Natural killer cell (primary cell): ENCODE measurements at regions of chr20 and their contacts with region 1.

Region 1: GRCh38 chr20:40962730-40963504 is 65.7 kb upstream of the TOP1 start:
- DNase-seq: peak; percentile 70 to 85
- ATAC-seq: peak; percentile 85 to 97 (median 94)
- H3K4me3 ChIP-seq: no peak overlapping the region
- H3K4me3 Mint-ChIP-seq: no peak overlapping the region
- H3K27ac ChIP-seq: no peak overlapping the region
- H3K27ac Mint-ChIP-seq: no peak overlapping the region
- H3K4me1 ChIP-seq: peaks cover 21% of the 10 kb centered on the region
- H3K4me1 Mint-ChIP-seq: peaks cover 9 to 10% of the 10 kb centered on the region in 2 donors
- H3K27me3 ChIP-seq: no peaks in the 10 kb centered on the region
- H3K27me3 Mint-ChIP-seq: peaks cover 0 to 4% of the 10 kb centered on the region in 2 donors
- CTCF ChIP-seq: peak; percentile 96

Region 2: DNA sequence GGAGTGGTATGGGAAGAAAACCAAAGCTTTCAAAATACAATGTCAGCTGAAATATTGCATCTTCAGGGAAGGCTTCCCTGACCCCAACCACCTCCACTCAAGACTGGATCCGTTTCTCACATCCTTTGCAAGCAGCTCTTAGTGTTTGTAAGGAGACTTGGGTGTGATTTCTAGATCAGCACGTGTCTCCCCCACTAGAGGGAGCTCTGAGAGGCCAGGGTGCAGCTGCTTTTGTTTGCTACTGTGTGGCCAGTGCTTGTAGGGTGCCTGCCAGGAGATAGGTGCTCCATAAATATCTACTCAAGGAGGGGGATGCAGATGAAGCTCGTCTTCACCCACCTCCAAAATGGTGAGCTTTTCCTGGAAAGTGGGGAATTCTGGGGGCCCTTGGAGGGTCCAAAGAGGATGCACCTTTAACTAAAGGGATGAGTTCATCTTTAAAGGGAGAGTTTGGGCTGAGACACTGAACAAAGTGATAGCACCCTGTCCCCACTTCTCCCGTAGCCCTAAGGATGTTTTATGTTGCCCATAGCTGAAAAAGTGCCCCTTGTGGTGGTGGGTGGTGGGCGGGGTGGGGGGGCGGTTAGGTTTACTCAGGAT is 221.3 kb before region 1 on chr20:
- intact Hi-C with region 1: loop called (anchors 1 kb)
- DNase-seq: peak; percentile 28 to 66
- ATAC-seq: peak in 2 of 3 donors; percentile 52 to 65
- H3K4me3 ChIP-seq: no peak overlapping the region
- H3K4me3 Mint-ChIP-seq: no peak overlapping the region
- H3K27ac ChIP-seq: no peak overlapping the region
- H3K27ac Mint-ChIP-seq: no peak overlapping the region
- H3K4me1 ChIP-seq: peaks cover 6% of the 10 kb centered on the region
- H3K4me1 Mint-ChIP-seq: peaks cover 0 to 13% of the 10 kb centered on the region in 2 donors
- H3K27me3 ChIP-seq: no peaks in the 10 kb centered on the region
- H3K27me3 Mint-ChIP-seq: peaks cover 22 to 38% of the 10 kb centered on the region in 2 donors
- CTCF ChIP-seq: peak; percentile 75

Region 3: DNA sequence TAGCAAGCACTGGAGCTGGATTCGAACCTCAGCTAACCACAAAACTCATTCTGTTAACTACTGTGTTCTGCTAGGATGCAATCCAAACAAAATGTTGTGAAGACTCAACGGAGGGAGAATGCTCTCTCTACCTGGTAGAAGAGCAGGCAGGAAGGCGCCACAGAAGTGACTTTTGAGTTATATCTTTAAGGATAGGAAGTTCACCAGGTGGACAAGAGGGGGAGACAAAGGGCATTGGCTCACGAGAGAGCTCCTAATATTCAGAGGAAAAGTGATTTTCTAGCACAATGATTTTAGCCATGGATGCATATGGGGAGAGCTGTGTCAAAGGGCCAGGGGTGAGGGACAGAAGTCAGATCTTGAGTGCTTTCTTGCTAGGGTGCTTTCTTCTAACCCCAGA is 165.5 kb before region 1 on chr20:
- intact Hi-C with region 1: loop called (anchors 1 kb)
- DNase-seq: peak in 1 of 2 donors; percentile 39
- ATAC-seq: peak in 1 of 3 donors; percentile 61
- H3K4me3 ChIP-seq: no peak overlapping the region
- H3K4me3 Mint-ChIP-seq: no peak overlapping the region
- H3K27ac ChIP-seq: no peak overlapping the region
- H3K27ac Mint-ChIP-seq: no peak overlapping the region
- H3K4me1 ChIP-seq: no peaks in the 10 kb centered on the region
- H3K4me1 Mint-ChIP-seq: no peaks in the 10 kb centered on the region
- H3K27me3 ChIP-seq: no peaks in the 10 kb centered on the region
- H3K27me3 Mint-ChIP-seq: peaks cover 10 to 23% of the 10 kb centered on the region in 2 donors
- CTCF ChIP-seq: peak; percentile 53

Region 4: GRCh38 chr20:41038878-41039404 is 76.0 kb after region 1 on chr20:
- intact Hi-C with region 1: no loop called
- DNase-seq: no peak
- ATAC-seq: no peak
- H3K4me3 ChIP-seq: no peak overlapping the region
- H3K4me3 Mint-ChIP-seq: no peak overlapping the region
- H3K27ac ChIP-seq: no peak overlapping the region
- H3K27ac Mint-ChIP-seq: no peak overlapping the region
- H3K4me1 ChIP-seq: peaks cover 8% of the 10 kb centered on the region
- H3K4me1 Mint-ChIP-seq: peaks cover 61 to 79% of the 10 kb centered on the region in 2 donors
- H3K27me3 ChIP-seq: no peaks in the 10 kb centered on the region
- H3K27me3 Mint-ChIP-seq: no peaks in the 10 kb centered on the region
- CTCF ChIP-seq: no peak

Region 5: GRCh38 chr20:41095110-41095969 is 132.4 kb after region 1 on chr20:
- intact Hi-C with region 1: loop called (anchors 1 kb)
- DNase-seq: peak; percentile 45 to 84
- ATAC-seq: peak; percentile 76 to 84 (median 77)
- H3K4me3 ChIP-seq: no peak overlapping the region
- H3K4me3 Mint-ChIP-seq: peak overlapping the region; percentile 35
- H3K27ac ChIP-seq: no peak overlapping the region
- H3K27ac Mint-ChIP-seq: peak overlapping the region in 1 of 2 donors; percentile 34
- H3K4me1 ChIP-seq: no peaks in the 10 kb centered on the region
- H3K4me1 Mint-ChIP-seq: peaks cover 0 to 5% of the 10 kb centered on the region in 2 donors
- H3K27me3 ChIP-seq: no peaks in the 10 kb centered on the region
- H3K27me3 Mint-ChIP-seq: no peaks in the 10 kb centered on the region
- CTCF ChIP-seq: peak; percentile 96

Region 6: DNA sequence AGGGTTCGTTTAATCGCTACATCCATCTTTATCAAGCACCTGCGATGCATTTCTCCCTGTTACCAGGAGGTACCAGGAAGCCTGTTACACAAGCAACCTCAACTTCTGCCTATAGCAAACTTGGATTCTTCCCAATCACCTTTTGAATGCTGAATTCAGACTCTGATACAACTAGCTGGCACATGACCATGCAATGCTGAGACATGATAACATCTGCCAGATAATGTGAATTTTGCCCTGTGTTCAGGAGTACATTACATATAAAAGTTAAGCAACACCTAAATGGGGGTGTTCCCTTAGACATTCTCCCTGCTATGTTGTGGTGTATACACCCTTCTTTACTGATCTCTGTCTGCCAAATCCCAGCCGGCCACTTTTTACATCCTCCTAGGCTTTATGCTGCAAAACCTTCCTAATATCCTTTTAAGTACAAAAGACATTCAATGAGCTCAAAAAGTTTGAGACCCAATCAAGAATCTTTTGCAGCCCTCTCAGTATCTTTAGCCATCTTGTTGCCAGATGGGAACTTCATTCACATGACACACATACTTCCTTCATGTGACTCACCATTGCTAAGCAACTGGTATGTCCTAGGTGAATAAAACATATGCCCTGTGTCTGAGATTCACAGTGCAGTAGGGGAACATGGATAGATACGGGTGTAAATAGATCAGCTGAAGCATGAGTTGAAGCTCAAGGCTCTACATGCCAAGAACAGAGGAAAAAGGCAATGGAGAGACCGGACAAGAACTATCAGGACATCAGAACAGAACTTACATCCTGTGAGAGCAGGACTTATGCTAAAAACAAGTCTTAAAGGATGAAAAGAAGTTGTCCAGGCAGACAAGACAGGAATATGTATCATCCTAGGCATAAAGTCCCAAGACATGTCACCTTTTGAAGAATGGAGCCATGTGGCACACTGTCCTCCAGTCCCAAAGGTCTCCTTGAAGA is 270.3 kb after region 1 on chr20:
- intact Hi-C with region 1: loop called (anchors 1 kb)
- DNase-seq: no peak
- ATAC-seq: no peak
- H3K4me3 ChIP-seq: no peak overlapping the region
- H3K4me3 Mint-ChIP-seq: no peak overlapping the region
- H3K27ac ChIP-seq: no peak overlapping the region
- H3K27ac Mint-ChIP-seq: no peak overlapping the region
- H3K4me1 ChIP-seq: peaks cover 4% of the 10 kb centered on the region
- H3K4me1 Mint-ChIP-seq: peaks cover 7 to 11% of the 10 kb centered on the region in 2 donors
- H3K27me3 ChIP-seq: no peaks in the 10 kb centered on the region
- H3K27me3 Mint-ChIP-seq: no peaks in the 10 kb centered on the region
- CTCF ChIP-seq: no peak

Region 7: DNA sequence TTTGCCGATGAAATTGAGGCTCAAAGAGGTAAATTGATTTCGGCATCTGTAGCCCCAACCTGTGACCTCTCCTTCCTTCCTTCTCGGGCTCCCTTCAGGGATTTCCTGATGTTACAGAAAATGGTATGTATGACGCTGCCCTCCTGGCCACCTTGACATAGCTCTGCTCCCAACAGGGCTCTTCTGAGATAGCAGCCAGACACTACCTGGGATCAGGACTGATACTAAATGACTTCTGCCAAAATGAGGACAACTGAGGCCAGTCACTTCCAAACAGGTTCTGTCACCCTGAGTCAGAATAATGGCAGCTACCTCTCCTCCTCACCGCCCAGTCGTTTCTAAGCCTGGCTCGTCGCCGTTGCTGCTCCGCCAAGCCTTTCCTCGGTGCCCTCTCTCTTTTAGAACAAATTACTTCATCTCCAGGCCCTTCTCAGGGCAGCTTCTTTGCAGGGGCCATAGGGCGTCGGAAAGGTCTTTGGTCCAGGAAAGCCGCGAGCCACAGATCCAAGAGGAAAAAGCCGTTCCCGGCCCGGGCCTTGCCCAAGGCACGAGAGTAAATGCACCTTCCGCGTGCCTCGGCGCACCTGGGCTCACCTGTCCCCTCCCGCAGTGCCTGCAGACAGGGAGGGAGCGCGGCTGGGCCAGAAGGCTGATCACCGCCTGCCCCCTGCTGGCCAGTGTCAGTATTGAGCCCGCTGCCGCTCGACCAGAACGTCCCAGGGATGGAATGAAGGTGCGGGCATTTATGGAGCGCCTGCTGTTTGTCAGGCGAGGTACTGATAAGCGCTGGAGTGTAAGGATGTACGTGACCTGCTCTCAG is 376.8 kb after region 1 on chr20:
- intact Hi-C with region 1: loop called (anchors 1 kb)
- DNase-seq: peak; percentile 81 to 90
- ATAC-seq: peak; percentile 89 to 97 (median 95)
- H3K4me3 ChIP-seq: peak overlapping the region; percentile 15
- H3K4me3 Mint-ChIP-seq: peak overlapping the region; percentile 87
- H3K27ac ChIP-seq: no peak overlapping the region
- H3K27ac Mint-ChIP-seq: peak overlapping the region in 1 of 2 donors; percentile 82
- H3K4me1 ChIP-seq: peaks cover 13% of the 10 kb centered on the region
- H3K4me1 Mint-ChIP-seq: peaks cover 11% of the 10 kb centered on the region in 2 donors
- H3K27me3 ChIP-seq: peaks cover 7% of the 10 kb centered on the region
- H3K27me3 Mint-ChIP-seq: peaks cover 11 to 19% of the 10 kb centered on the region in 2 donors
- CTCF ChIP-seq: peak; percentile 99